ENCODE measurements at regions of chr7 and their contacts with region 1.

Region 1: GRCh38 chr7:35701287-35701900 is 6.5 kb upstream of the HERPUD2 start:
- DNase-seq: no peak

Region 2: GRCh38 chr7:35424869-35425495 is 276.4 kb before region 1 on chr7:
- intact Hi-C with region 1: no loop called
- DNase-seq: peak in 3 of 10 donors; percentile 11 to 81 (median 36)

Region 3: DNA sequence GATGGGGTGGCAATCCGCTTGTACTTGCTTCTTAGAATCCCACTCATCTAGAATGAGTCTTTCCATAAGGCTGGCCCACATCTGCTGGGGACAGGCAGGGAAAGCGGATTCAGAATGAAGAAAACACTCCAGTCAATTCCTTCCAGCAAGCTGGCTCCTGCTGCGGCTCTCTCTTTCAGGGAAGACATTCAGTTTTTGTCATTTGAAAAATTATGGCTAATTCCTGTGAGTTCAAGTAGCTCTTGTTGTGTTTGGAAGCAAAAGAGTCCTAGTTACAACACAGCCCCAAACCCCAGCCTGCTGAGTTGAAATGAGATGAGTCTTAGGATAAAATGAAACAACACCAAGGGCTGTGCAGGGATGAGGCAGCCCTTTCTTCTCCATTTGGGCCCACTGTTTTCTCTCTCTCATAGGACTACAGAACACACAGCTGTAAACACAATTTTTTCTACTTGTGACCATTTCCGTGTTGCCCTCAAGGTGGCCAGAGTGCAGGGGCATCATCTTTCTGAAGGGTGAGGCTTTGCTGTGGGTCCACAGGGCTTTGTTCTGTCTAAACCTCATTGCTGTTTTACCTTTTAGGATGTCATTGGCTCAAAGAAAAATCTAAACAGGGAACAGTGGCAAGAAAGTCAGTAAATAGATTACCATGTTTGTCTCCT is 360.9 kb after region 1 on chr7:
- intact Hi-C with region 1: no loop called
- DNase-seq: no peak

Region 4: DNA sequence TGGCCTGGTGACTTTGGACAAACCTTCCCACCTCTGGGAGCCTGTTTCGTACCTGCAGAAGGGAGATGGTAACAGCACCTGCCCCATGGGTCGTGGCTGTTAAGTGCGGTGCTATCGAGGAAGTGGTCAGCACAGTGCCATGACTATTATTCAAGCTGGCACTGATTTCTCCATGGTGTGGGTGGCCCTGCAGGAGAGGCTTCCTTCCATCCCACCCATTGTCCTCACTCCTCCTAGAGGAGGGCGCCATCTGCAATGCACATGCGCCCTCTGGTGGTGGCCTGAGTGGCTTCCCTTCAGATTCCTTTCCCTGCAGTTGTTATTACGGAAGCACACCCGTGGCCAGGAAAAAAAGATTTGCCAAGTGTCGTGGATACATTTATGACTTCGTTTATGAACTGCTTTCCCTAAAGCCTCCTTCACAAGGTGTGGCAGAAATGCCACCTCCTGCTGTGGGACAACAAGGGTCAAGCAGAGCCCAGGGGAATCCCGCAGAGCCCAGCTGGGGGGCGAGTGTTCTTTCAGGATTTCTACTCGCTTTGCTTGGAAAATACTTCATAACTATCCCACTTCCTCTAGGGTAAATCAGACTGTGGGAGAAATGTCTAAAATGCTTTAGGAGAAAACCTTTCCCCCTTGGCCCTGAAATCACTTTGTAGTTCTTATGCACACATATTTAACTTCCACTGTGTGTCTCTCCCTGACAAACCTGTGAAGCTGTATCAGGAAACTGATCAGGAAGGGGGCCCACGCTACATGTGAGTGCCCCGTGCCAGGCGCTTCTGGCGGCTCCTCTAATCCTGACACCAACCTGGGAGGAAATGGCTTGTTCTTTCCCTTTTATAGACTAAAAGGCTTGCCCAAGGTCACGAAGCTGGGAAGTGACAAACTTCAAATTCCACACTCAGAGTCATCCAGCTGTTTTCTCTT is 590.3 kb after region 1 on chr7:
- intact Hi-C with region 1: loop called (anchors 10 kb)
- DNase-seq: peak; percentile 66 to 97 (median 88)